ENCODE measurements at regions of chr6 and their contacts with region 1.

Region 1: GRCh38 chr6:33299237-33299944 is 649 bp upstream of the RGL2 start:
- DNase-seq: peak; percentile 97
- ATAC-seq: peak; percentile 87
- H3K4me3 Mint-ChIP-seq: peak overlapping the region; percentile 80
- H3K27ac Mint-ChIP-seq: peak overlapping the region; percentile 98
- H3K4me1 Mint-ChIP-seq: peaks cover 28% of the 10 kb centered on the region
- H3K27me3 Mint-ChIP-seq: no peaks in the 10 kb centered on the region

Region 2: GRCh38 chr6:32774426-32774825 is 525.0 kb before region 1 on chr6:
- CTCF ChIA-PET with region 1: no interaction called
- POLR2A ChIA-PET with region 1: no interaction called
- intact Hi-C with region 1: no loop called
- DNase-seq: no peak
- ATAC-seq: peak; percentile 51
- H3K4me3 Mint-ChIP-seq: no peak overlapping the region
- H3K27ac Mint-ChIP-seq: no peak overlapping the region
- H3K4me1 Mint-ChIP-seq: no peaks in the 10 kb centered on the region
- H3K27me3 Mint-ChIP-seq: peaks cover 25% of the 10 kb centered on the region

Region 3: DNA sequence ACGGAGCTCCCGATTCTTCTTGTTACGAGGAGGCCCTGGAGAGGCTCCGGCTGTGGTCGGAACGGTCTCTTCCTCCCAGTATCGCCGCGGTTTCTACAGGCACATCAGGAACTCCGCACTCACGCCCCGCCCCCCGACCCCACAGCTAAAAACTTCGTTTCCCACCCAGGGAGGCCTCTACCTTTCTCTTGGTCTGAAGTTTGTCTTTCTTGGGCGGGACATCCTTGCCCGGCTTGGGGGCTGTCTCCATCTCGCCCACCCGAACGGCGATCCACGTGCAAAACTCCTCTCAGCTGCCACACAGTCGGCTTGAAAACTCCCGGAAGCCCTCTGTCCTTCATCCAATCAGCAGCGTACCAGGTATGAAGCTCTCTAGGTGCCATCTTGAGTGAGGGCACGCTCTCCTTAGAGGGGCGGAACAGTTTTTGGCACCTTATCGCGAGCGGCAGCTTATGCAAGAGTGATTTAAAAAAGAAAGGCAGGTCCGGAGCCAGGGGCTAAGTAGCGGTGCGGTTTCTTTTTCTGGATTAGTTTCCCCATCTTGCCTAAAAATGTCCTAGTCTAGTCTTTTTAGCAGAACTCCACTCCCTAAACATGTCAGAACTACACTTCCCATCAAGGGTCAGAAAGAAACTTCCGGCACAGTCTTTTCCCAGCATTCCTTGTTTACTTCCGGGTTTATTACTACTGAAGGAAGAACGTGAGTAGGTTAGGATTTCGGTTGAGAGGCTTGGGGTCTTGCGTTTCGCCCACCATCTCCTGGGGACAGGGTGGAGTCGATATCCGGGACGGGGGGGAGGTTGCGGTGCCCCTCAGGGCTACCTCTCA is 10.3 kb before region 1 on chr6 and contains the starts of genes PFDN6 and WDR46:
- CTCF ChIA-PET with region 1: interaction called, 17 read pairs
- POLR2A ChIA-PET with region 1: interaction called, 14 read pairs
- intact Hi-C with region 1: loop called (anchors 1 kb)
- DNase-seq: peak; percentile 87
- ATAC-seq: peak; percentile 98
- H3K4me3 Mint-ChIP-seq: peak within 1 kb of the TSS; percentile 98
- H3K27ac Mint-ChIP-seq: peak within 1 kb of the TSS; percentile 97
- H3K4me1 Mint-ChIP-seq: peaks cover 37% of the 10 kb centered on the region
- H3K27me3 Mint-ChIP-seq: no peaks in the 10 kb centered on the region
- total RNA-seq, gene PFDN6: 65.4 to 96.9 TPM
- total RNA-seq, gene WDR46: 63.5 to 69.4 TPM

Region 4: GRCh38 chr6:33312409-33313158 is 13.2 kb after region 1 on chr6:
- CTCF ChIA-PET with region 1: interaction called, 13 read pairs
- POLR2A ChIA-PET with region 1: interaction called, 7 read pairs
- intact Hi-C with region 1: loop called (anchors 1 kb)
- DNase-seq: peak; percentile 90
- ATAC-seq: peak; percentile 40
- H3K4me3 Mint-ChIP-seq: peak overlapping the region; percentile 99
- H3K27ac Mint-ChIP-seq: peak overlapping the region; percentile 98
- H3K4me1 Mint-ChIP-seq: peaks cover 52% of the 10 kb centered on the region
- H3K27me3 Mint-ChIP-seq: no peaks in the 10 kb centered on the region

Region 5: GRCh38 chr6:33323623-33323948 is 24.2 kb after region 1 on chr6:
- CTCF ChIA-PET with region 1: interaction called, 13 read pairs
- POLR2A ChIA-PET with region 1: interaction called, 7 read pairs
- intact Hi-C with region 1: loop called in 1 of 2 experiments (anchors 1 kb)
- DNase-seq: no peak
- ATAC-seq: no peak
- H3K4me3 Mint-ChIP-seq: peak overlapping the region; percentile 99
- H3K27ac Mint-ChIP-seq: peak overlapping the region; percentile 99
- H3K4me1 Mint-ChIP-seq: peaks cover 46% of the 10 kb centered on the region
- H3K27me3 Mint-ChIP-seq: no peaks in the 10 kb centered on the region

Region 6: DNA sequence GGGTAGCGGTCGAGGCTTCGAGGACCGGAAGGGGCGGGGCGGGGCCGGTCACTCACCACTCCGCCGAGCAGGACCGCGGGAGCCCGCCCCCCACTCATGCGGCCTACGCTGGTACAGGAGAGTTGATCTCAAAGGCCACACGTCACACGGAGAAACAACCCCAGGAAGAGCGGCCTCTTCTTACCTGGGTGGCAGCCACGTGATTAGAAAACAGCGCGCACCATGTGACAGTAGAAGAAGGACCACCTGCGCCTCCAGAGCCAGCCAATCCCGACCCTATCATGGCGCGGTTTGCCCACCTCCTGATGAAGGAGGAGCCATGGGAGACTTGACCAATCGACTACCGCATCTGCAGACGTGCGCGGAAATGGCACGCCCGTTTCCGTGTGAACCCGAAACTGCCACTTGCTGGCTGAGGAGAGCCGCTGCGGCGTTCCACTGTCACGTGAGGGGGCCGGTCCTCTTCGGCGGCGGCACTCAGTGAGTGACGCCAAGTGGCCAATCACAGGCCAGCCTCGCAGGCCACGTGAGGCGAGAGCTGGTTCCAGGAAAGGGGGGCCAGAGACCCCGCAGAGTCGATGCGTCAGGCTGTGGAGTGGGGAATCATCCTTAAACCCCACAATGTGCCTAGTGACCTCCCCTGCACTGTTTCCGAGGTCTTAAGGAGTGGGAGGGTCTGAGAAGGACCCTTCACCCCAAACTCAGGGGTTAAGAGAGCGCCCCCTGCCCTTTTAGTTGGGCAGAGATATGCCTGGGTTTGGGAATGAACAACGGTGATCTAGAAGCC is 118.7 kb after region 1 on chr6 and contains the start of gene CUTA:
- CTCF ChIA-PET with region 1: no interaction called
- POLR2A ChIA-PET with region 1: no interaction called
- intact Hi-C with region 1: loop called in 1 of 2 experiments (anchors 1 kb)
- DNase-seq: peak; percentile 100
- ATAC-seq: peak; percentile 87
- H3K4me3 Mint-ChIP-seq: peak within 1 kb of the TSS; percentile 96
- H3K27ac Mint-ChIP-seq: peak within 1 kb of the TSS; percentile 98
- H3K4me1 Mint-ChIP-seq: peaks cover 54% of the 10 kb centered on the region
- H3K27me3 Mint-ChIP-seq: no peaks in the 10 kb centered on the region
- total RNA-seq, gene CUTA: 154 to 188 TPM

Region 7: GRCh38 chr6:33812669-33813068 is 513.3 kb after region 1 on chr6:
- CTCF ChIA-PET with region 1: no interaction called
- POLR2A ChIA-PET with region 1: no interaction called
- intact Hi-C with region 1: no loop called
- DNase-seq: peak; percentile 67
- ATAC-seq: no peak
- H3K4me3 Mint-ChIP-seq: no peak overlapping the region
- H3K27ac Mint-ChIP-seq: no peak overlapping the region
- H3K4me1 Mint-ChIP-seq: peaks cover 15% of the 10 kb centered on the region
- H3K27me3 Mint-ChIP-seq: peaks cover 49% of the 10 kb centered on the region

Measured in activated CD4-positive, alpha-beta T cell treated with anti-CD3 and anti-CD28 coated beads for 36 hours (primary cell).